GM10248 (cell line): ENCODE measurements at regions of chr22 and their contacts with region 1.

Region 1: DNA sequence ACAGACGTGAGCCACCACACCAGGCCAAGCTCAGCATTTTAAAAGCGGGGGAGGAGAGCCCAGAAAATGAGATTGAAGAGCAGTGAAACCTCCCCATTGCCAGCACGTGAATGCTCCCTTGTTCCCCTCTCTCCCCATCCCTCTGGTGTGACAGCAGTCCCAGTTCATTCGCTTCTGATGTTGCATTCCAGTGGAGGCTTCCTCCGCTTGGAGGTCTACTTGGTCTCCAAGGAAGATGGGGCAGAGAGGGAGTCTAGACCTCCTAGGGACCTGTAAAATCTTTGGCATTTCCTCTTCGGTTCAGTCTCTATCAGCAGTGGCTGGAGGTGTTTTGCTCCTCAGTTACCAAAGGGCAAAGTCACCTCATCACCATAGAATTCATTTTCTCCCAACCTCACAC is 30.2 kb upstream of the EP300 start:
- DNase-seq: no peak
- CTCF ChIP-seq: no peak

Region 2: GRCh38 chr22:41106122-41106968 is 44.2 kb after region 1 on chr22:
- CTCF ChIA-PET with region 1: no interaction called
- POLR2A ChIA-PET with region 1: interaction called, 10 read pairs
- DNase-seq: no peak
- CTCF ChIP-seq: no peak